ENCODE measurements at regions of chr3 and their contacts with region 1.

Region 1: GRCh38 chr3:71926262-71926600 is 141.3 kb upstream of the PROK2 start:
- DNase-seq: peak; percentile 48
- ATAC-seq: peak; percentile 12
- H3K4me3 Mint-ChIP-seq: no peak overlapping the region
- H3K27ac Mint-ChIP-seq: no peak overlapping the region
- H3K4me1 Mint-ChIP-seq: peaks cover 3% of the 10 kb centered on the region
- H3K27me3 Mint-ChIP-seq: no peaks in the 10 kb centered on the region

Region 2: DNA sequence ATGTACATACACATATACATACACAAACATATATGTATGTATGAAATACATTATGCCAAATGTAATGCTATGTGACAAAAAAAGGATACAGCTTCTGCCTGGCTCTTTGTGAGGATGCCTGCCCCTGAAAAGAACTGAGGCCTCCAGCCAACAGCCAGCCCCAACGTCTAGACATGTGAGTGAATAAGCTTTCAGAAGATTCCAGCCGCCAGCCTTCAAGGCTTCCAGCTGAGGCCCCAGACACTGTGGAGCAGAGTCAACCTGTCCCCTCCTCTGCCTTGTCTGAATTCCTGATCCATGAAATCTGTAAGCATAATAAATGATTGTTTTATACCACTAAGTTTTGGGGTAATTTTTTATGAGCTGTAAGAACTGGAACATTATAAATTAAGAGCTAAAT is 986.3 kb after region 1 on chr3:
- CTCF ChIA-PET with region 1: no interaction called
- POLR2A ChIA-PET with region 1: no interaction called
- intact Hi-C with region 1: loop called in 1 of 2 experiments (anchors 10 kb)
- DNase-seq: no peak
- ATAC-seq: no peak
- H3K4me3 Mint-ChIP-seq: no peak overlapping the region
- H3K27ac Mint-ChIP-seq: no peak overlapping the region
- H3K4me1 Mint-ChIP-seq: no peaks in the 10 kb centered on the region
- H3K27me3 Mint-ChIP-seq: peaks cover 3% of the 10 kb centered on the region

Measured in activated CD4-positive, alpha-beta T cell treated with anti-CD3 and anti-CD28 coated beads for 36 hours (primary cell).